ENCODE measurements at regions of chr10 and their contacts with region 1.

Region 1: GRCh38 chr10:46544989-46545791 is 11.3 kb downstream of the GPRIN2 start:
- DNase-seq: peak in 8 of 10 donors; percentile 3 to 42 (median 29)
- H3K4me3 ChIP-seq: no peak overlapping the region
- H3K27ac ChIP-seq: no peak overlapping the region
- H3K27me3 ChIP-seq: peaks cover 0 to 76% (median 20%) of the 10 kb centered on the region in 45 donors
- CTCF ChIP-seq: peak in 15 of 56 donors; percentile 10 to 48 (median 20)

Region 2: DNA sequence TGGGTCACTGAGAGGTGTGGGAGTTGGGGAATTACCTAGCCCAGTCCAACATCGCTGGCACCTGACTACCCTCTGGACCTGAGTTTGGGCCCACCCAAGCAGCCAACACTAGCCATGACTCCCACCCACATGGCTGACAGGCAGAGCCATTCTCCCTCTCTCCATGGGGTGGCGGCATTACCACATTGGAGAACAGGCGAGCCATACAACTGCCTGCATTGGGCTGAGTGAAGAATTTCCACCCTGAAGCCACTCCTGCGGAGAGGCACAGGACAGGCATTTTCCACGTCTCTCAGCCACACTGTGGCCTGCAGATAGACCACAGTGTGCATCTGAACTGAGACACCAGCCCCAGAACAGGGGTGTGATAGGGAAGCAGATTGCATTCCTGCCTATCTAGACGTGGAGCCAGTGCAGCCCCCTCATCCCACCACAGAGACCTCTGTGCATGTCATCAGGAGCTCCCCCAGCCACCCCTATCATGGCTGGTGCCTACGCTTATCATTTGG is 316.6 kb before region 1 on chr10:
- intact Hi-C with region 1: no loop called
- DNase-seq: peak; percentile 38 to 85 (median 78)
- H3K4me3 ChIP-seq: no peak overlapping the region
- H3K27ac ChIP-seq: peak overlapping the region in 1 of 59 donors; percentile 18
- H3K27me3 ChIP-seq: no peaks in the 10 kb centered on the region
- CTCF ChIP-seq: peak; percentile 52 to 99 (median 86)

Region 3: DNA sequence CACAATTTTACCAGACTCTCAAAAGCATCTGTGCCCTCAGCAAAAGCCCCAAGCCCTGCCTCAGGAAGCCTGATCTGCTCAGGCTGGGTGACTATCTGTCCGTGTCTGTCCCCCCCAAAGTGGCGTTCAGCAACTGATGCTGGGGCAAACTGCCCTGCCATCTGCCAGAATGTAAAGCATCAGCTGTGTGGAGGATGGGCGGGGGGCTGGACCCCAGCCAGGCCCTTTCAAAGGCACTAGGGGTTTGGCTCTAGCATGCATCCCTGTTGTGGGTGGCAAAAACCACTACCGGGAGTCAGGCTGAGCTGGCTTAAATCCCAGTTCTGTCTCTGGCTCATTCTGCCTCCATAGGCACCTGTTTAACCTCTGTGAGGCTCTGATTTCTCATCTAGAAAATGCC is 24.3 kb before region 1 on chr10:
- intact Hi-C with region 1: loop called in 1 of 2 experiments (anchors 2 kb)
- DNase-seq: peak in 8 of 10 donors; percentile 20 to 94 (median 46)
- H3K4me3 ChIP-seq: no peak overlapping the region
- H3K27ac ChIP-seq: peak overlapping the region in 1 of 59 donors; percentile 54
- H3K27me3 ChIP-seq: peaks cover 0 to 14% (median 0%) of the 10 kb centered on the region in 45 donors
- CTCF ChIP-seq: no peak

Region 4: GRCh38 chr10:46557316-46558121 is 12.3 kb after region 1 on chr10:
- intact Hi-C with region 1: loop called in 1 of 2 experiments (anchors 2 kb)
- DNase-seq: peak in 9 of 10 donors; percentile 5 to 53 (median 33)
- H3K4me3 ChIP-seq: peak overlapping the region in 1 of 59 donors; percentile 62
- H3K27ac ChIP-seq: no peak overlapping the region
- H3K27me3 ChIP-seq: peaks cover 0 to 74% (median 52%) of the 10 kb centered on the region in 45 donors
- CTCF ChIP-seq: no peak

Region 5: GRCh38 chr10:47010036-47010435 is 464.8 kb after region 1 on chr10:
- intact Hi-C with region 1: no loop called
- DNase-seq: no peak
- H3K4me3 ChIP-seq: no peak overlapping the region
- H3K27ac ChIP-seq: no peak overlapping the region
- H3K27me3 ChIP-seq: no peaks in the 10 kb centered on the region
- CTCF ChIP-seq: no peak

Region 6: DNA sequence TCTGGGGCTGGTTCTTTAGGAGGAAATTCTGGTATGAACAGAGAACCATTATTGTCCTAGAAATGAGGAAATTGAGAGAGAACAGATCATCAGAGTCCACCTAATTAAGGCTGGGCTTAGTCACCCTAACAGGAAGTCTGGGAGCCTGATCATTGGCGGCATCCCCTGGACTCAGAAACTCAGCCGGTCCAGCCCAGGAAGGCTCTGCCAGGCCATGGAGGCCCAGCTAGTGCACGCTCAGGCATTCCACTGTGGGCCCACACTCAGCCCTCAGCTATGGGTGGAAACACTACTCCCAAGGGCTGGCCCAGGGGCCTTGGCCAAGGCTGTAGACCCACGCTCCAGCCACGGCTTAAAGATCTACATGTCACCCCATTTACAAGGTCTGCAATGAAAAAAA is 475.3 kb after region 1 on chr10:
- intact Hi-C with region 1: no loop called
- DNase-seq: peak in 3 of 10 donors; percentile 19 to 26 (median 21)
- H3K4me3 ChIP-seq: no peak overlapping the region
- H3K27ac ChIP-seq: no peak overlapping the region
- H3K27me3 ChIP-seq: peaks cover 0 to 4% (median 0%) of the 10 kb centered on the region in 45 donors
- CTCF ChIP-seq: no peak

Region 7: GRCh38 chr10:47034441-47035051 is 489.4 kb after region 1 on chr10:
- intact Hi-C with region 1: no loop called
- DNase-seq: peak in 5 of 10 donors; percentile 23 to 38 (median 35)
- H3K4me3 ChIP-seq: no peak overlapping the region
- H3K27ac ChIP-seq: no peak overlapping the region
- H3K27me3 ChIP-seq: no peaks in the 10 kb centered on the region
- CTCF ChIP-seq: no peak

Measured in dorsolateral prefrontal cortex (tissue), 120 donors.